ENCODE measurements at regions of chr2 and their contacts with region 1.

Region 1: DNA sequence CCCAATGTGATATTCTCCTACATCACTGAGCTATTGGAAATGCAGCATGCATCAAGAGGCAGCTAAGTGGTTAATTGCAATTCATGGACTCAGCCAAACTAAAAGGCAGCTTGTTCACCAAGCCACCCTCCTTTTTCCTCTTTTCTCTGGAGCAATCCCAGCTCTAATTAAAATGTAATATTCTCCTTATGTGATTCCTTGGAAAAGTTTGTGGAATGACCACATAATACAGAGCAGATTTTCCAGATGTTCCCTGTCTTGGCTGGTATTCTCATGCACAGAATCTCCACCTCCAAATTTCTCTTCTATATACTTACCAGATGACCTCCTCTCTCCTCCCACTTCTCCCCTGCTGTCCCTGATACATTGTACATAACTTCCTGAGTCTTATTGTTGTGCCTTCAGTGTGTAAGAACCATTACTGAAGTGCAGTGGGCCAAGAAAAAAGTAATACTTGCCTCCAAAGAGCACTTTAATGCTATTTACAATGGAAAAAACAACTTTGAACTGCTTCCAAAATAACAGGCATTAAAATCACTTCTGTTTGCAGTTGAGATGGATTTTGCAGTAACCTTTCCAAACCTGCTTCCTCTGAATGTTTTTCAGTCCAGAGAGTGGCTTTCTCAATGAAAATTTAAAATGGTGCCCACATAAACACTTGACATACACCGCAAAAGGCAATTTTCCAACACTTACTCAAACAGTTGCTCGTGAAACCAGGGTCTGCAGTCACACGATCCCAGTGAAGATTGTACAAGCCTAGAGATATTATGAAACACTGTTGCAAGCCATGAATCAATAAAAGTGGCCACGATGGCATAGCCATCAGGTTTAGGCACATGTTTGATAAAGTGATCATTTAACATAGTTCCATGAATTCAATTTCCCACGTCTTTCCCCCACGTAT is 258.0 kb downstream of the MTX2 start:
- DNase-seq: peak in 1 of 2 donors; percentile 18
- ATAC-seq: peak in 7 of 8 donors; percentile 50 to 95 (median 91)
- H3K4me3 ChIP-seq: no peak overlapping the region
- H3K27ac ChIP-seq: peak overlapping the region in 2 of 10 donors; percentile 18 to 33
- H3K4me1 ChIP-seq: peaks cover 0 to 45% (median 21%) of the 10 kb centered on the region in 9 donors
- H3K27me3 ChIP-seq: peaks cover 0 to 30% (median 0%) of the 10 kb centered on the region in 7 donors
- CTCF ChIP-seq: no peak

Region 2: GRCh38 chr2:176473177-176473576 is 54.1 kb before region 1 on chr2:
- intact Hi-C with region 1: no loop called
- DNase-seq: peak; percentile 21 to 27
- ATAC-seq: peak in 6 of 8 donors; percentile 58 to 76 (median 68)
- H3K4me3 ChIP-seq: peak overlapping the region in 7 of 10 donors; percentile 0 to 40 (median 38)
- H3K27ac ChIP-seq: peak overlapping the region in 3 of 10 donors; percentile 7 to 27 (median 13)
- H3K4me1 ChIP-seq: peaks cover 0 to 11% (median 6%) of the 10 kb centered on the region in 9 donors
- H3K27me3 ChIP-seq: peaks cover 0 to 13% (median 4%) of the 10 kb centered on the region in 7 donors
- CTCF ChIP-seq: no peak

Region 3: GRCh38 chr2:176491172-176491904 is 35.9 kb before region 1 on chr2:
- intact Hi-C with region 1: loop called in 1 of 10 experiments (anchors 5 kb)
- DNase-seq: peak; percentile 58
- ATAC-seq: peak; percentile 83 to 89 (median 86)
- H3K4me3 ChIP-seq: no peak overlapping the region
- H3K27ac ChIP-seq: peak overlapping the region; percentile 2 to 84 (median 75)
- H3K4me1 ChIP-seq: peaks cover 3 to 52% (median 25%) of the 10 kb centered on the region in 9 donors
- H3K27me3 ChIP-seq: peaks cover 0 to 38% (median 6%) of the 10 kb centered on the region in 7 donors
- CTCF ChIP-seq: no peak

Region 4: DNA sequence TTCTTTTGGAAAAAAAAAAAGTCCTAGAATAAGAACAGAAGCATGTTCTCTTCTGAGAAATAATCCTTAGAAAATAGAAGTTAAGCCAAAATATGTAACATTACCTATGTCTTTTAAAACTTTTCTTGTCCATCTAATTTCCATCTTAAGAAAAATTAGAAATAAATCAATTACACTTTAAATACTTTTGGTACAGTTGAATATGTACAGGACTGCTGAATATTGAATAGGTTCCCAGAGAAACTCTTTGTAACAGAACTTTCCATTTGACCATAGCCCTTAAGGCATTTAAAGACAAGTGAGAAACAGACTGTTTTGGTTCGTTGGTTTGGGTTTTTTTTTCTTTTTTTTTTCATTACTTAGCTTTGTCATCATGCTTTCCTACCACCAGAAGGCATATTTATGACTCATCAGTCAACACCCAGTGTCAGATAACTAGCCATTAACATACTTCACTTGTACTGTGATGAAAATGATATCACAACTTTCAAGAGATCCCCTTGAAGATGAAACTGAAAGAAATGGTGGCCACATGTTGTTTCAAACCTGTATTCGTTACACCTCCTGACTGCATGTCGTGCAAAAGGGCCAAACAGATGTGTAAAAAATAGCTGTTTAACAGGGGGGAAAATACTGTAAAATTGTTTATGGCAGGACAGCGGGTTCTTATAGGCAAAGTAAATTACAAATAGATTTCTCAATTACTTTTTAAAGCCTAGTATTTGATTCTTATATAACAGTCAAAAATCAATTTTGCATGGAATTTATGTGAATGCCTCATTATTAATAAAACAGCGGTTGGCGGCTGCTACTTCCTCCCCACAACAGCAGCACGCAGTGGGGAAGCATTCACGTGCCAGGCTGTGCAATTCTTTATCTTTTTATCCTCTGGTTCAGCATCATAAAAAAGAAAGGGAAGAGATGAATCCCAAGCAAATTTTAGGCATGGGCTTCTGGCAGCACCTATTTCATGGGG is 404.6 kb after region 1 on chr2:
- intact Hi-C with region 1: no loop called
- DNase-seq: no peak
- ATAC-seq: no peak
- H3K4me3 ChIP-seq: no peak overlapping the region
- H3K27ac ChIP-seq: peak overlapping the region in 1 of 10 donors; percentile 16
- H3K4me1 ChIP-seq: peaks cover 0 to 18% (median 0%) of the 10 kb centered on the region in 9 donors
- H3K27me3 ChIP-seq: peaks cover 0 to 8% (median 0%) of the 10 kb centered on the region in 7 donors
- CTCF ChIP-seq: no peak

Measured in heart right ventricle (tissue), 16 donors.